ENCODE measurements at regions of chr4 and their contacts with region 1.

Region 1: GRCh38 chr4:184538023-184538599 is 63.8 kb upstream of the IRF2 start:
- DNase-seq: peak in 8 of 9 donors; percentile 42 to 67 (median 56)
- ATAC-seq: peak; percentile 79
- H3K4me3 ChIP-seq: peak overlapping the region; percentile 86
- H3K4me3 Mint-ChIP-seq: peak overlapping the region; percentile 83 to 99 (median 95)
- H3K27ac ChIP-seq: peak overlapping the region; percentile 97
- H3K27ac Mint-ChIP-seq: peak overlapping the region; percentile 90 to 100 (median 99)
- H3K4me1 ChIP-seq: peaks cover 20 to 22% of the 10 kb centered on the region in 2 donors
- H3K4me1 Mint-ChIP-seq: peaks cover 34 to 51% (median 45%) of the 10 kb centered on the region in 7 donors
- H3K27me3 ChIP-seq: no peaks in the 10 kb centered on the region
- H3K27me3 Mint-ChIP-seq: no peaks in the 10 kb centered on the region

Region 2: GRCh38 chr4:183444214-183445066 is 1093.7 kb before region 1 on chr4 and contains the start of gene CDKN2AIP:
- CTCF ChIA-PET with region 1: no interaction called
- POLR2A ChIA-PET with region 1: no interaction called
- intact Hi-C with region 1: loop called (anchors 2 to 10 kb)
- DNase-seq: peak; percentile 92 to 97 (median 95)
- ATAC-seq: peak; percentile 93
- H3K4me3 ChIP-seq: peak within 1 kb of the TSS; percentile 81
- H3K4me3 Mint-ChIP-seq: peak within 1 kb of the TSS; percentile 94 to 99 (median 97)
- H3K27ac ChIP-seq: peak within 1 kb of the TSS; percentile 96
- H3K27ac Mint-ChIP-seq: peak within 1 kb of the TSS; percentile 97 to 98 (median 98)
- H3K4me1 ChIP-seq: peaks cover 30 to 33% of the 10 kb centered on the region in 2 donors
- H3K4me1 Mint-ChIP-seq: peaks cover 35 to 66% (median 51%) of the 10 kb centered on the region in 7 donors
- H3K27me3 ChIP-seq: no peaks in the 10 kb centered on the region
- H3K27me3 Mint-ChIP-seq: peaks cover 0 to 5% (median 0%) of the 10 kb centered on the region in 5 donors
- total RNA-seq, gene CDKN2AIP: 24.9 to 58.2 (median 44.4) TPM

Region 3: DNA sequence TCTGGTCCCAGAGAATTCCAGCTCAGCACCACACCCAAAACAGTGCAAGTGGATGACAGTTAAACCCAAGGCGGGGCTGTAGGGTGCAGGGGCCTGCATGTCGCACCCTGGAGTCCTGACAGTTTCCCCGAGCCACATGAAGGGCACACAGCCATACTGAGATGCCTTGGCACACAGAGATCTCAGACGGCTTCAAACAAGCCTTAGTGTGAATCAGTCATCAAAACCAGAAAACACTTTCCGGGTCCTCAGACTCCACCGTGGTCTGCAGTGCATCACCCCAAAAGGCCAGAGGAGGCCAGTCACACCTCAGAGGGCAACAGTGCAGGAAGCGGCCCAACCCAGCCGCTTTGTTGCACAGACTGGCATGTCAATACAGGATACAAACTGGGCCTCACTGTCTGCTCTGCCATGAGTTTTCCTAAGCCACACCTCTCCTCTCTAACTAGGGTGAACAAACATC is 255.8 kb before region 1 on chr4:
- CTCF ChIA-PET with region 1: no interaction called
- POLR2A ChIA-PET with region 1: no interaction called
- intact Hi-C with region 1: loop called (anchors 5 kb)
- DNase-seq: peak in 5 of 9 donors; percentile 8 to 56 (median 25)
- ATAC-seq: peak; percentile 75
- H3K4me3 ChIP-seq: no peak overlapping the region
- H3K4me3 Mint-ChIP-seq: peak overlapping the region in 2 of 10 donors; percentile 1 to 25
- H3K27ac ChIP-seq: no peak overlapping the region
- H3K27ac Mint-ChIP-seq: peak overlapping the region in 8 of 9 donors; percentile 17 to 90 (median 64)
- H3K4me1 ChIP-seq: peaks cover 24 to 35% of the 10 kb centered on the region in 2 donors
- H3K4me1 Mint-ChIP-seq: peaks cover 22 to 50% (median 38%) of the 10 kb centered on the region in 7 donors
- H3K27me3 ChIP-seq: no peaks in the 10 kb centered on the region
- H3K27me3 Mint-ChIP-seq: no peaks in the 10 kb centered on the region

Region 4: DNA sequence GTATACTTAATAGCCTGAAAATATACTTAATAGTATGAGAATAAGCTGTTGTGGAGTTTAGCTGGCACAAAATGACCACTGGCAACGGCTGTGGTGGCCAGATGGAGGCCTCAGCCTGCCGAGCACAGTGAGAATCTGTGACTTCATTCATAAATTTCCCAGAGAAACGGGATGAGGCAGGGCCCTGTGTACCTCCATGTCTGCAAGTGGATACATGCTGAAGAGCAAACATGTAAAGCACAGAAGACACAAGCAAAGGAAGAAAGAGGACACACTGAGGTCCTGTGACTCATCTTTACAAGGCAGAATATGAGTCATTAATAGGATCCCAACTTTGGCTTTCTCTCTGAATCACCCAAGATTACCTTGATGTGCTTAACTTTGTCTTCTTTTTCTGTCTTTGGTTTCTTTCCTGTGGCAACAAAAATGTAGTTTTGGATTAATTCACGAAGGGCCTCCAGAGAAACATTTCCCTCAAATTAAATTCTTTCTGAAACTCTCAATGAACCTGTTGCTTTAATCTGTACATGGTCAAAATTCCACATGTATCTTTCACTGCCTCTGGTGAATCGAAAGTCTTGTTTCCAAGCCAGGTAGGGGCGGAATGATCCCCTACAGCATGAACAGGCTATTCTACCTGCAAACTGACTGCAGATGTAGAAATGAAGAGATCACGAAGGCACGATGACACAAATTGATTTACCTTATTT is 120.2 kb before region 1 on chr4:
- CTCF ChIA-PET with region 1: no interaction called
- POLR2A ChIA-PET with region 1: interaction called, 6 read pairs
- intact Hi-C with region 1: loop called (anchors 1 kb)
- DNase-seq: peak in 2 of 9 donors; percentile 26 to 31
- ATAC-seq: peak; percentile 69
- H3K4me3 ChIP-seq: peak overlapping the region; percentile 64
- H3K4me3 Mint-ChIP-seq: peak overlapping the region; percentile 23 to 94 (median 82)
- H3K27ac ChIP-seq: peak overlapping the region; percentile 74
- H3K27ac Mint-ChIP-seq: peak overlapping the region; percentile 82 to 97 (median 95)
- H3K4me1 ChIP-seq: peaks cover 35 to 52% of the 10 kb centered on the region in 2 donors
- H3K4me1 Mint-ChIP-seq: peaks cover 43 to 80% (median 77%) of the 10 kb centered on the region in 7 donors
- H3K27me3 ChIP-seq: no peaks in the 10 kb centered on the region
- H3K27me3 Mint-ChIP-seq: no peaks in the 10 kb centered on the region

Region 5: GRCh38 chr4:184583738-184584502 is 45.8 kb after region 1 on chr4:
- CTCF ChIA-PET with region 1: no interaction called
- POLR2A ChIA-PET with region 1: no interaction called
- intact Hi-C with region 1: loop called in 1 of 2 experiments (anchors 2 kb)
- DNase-seq: no peak
- ATAC-seq: peak; percentile 54
- H3K4me3 ChIP-seq: no peak overlapping the region
- H3K4me3 Mint-ChIP-seq: peak overlapping the region in 2 of 10 donors; percentile 9 to 26
- H3K27ac ChIP-seq: no peak overlapping the region
- H3K27ac Mint-ChIP-seq: peak overlapping the region in 5 of 9 donors; percentile 4 to 53 (median 48)
- H3K4me1 ChIP-seq: no peaks in the 10 kb centered on the region
- H3K4me1 Mint-ChIP-seq: peaks cover 2 to 22% (median 12%) of the 10 kb centered on the region in 7 donors
- H3K27me3 ChIP-seq: no peaks in the 10 kb centered on the region
- H3K27me3 Mint-ChIP-seq: peaks cover 0 to 3% (median 0%) of the 10 kb centered on the region in 5 donors

Region 6: GRCh38 chr4:185203486-185204237 is 665.6 kb after region 1 on chr4 and contains the start of gene CFAP97:
- CTCF ChIA-PET with region 1: no interaction called
- POLR2A ChIA-PET with region 1: no interaction called
- intact Hi-C with region 1: loop called (anchors 5 to 10 kb)
- DNase-seq: peak; percentile 78 to 90 (median 85)
- ATAC-seq: peak; percentile 89
- H3K4me3 ChIP-seq: peak within 1 kb of the TSS; percentile 64
- H3K4me3 Mint-ChIP-seq: peak within 1 kb of the TSS; percentile 87 to 99 (median 96)
- H3K27ac ChIP-seq: peak within 1 kb of the TSS; percentile 75
- H3K27ac Mint-ChIP-seq: peak within 1 kb of the TSS; percentile 95 to 99 (median 98)
- H3K4me1 ChIP-seq: peaks cover 22% of the 10 kb centered on the region in 2 donors
- H3K4me1 Mint-ChIP-seq: peaks cover 28 to 60% (median 53%) of the 10 kb centered on the region in 7 donors
- H3K27me3 ChIP-seq: no peaks in the 10 kb centered on the region
- H3K27me3 Mint-ChIP-seq: peaks cover 0 to 3% (median 0%) of the 10 kb centered on the region in 5 donors
- total RNA-seq, gene CFAP97: 23.6 to 46.5 (median 38.0) TPM

Region 7: GRCh38 chr4:186201535-186202230 is 1663.6 kb after region 1 on chr4:
- CTCF ChIA-PET with region 1: no interaction called
- POLR2A ChIA-PET with region 1: no interaction called
- intact Hi-C with region 1: loop called in 1 of 2 experiments (anchors 5 kb)
- DNase-seq: peak in 8 of 9 donors; percentile 12 to 70 (median 50)
- ATAC-seq: peak; percentile 98
- H3K4me3 ChIP-seq: no peak overlapping the region
- H3K4me3 Mint-ChIP-seq: peak overlapping the region in 7 of 10 donors; percentile 0 to 55 (median 35)
- H3K27ac ChIP-seq: peak overlapping the region; percentile 48
- H3K27ac Mint-ChIP-seq: peak overlapping the region in 8 of 9 donors; percentile 14 to 97 (median 56)
- H3K4me1 ChIP-seq: no peaks in the 10 kb centered on the region
- H3K4me1 Mint-ChIP-seq: peaks cover 8 to 51% (median 20%) of the 10 kb centered on the region in 7 donors
- H3K27me3 ChIP-seq: no peaks in the 10 kb centered on the region
- H3K27me3 Mint-ChIP-seq: no peaks in the 10 kb centered on the region

Measured in naive thymus-derived CD4-positive, alpha-beta T cell (primary cell).